ENCODE measurements at regions of chr17 and their contacts with region 1.

Region 1: DNA sequence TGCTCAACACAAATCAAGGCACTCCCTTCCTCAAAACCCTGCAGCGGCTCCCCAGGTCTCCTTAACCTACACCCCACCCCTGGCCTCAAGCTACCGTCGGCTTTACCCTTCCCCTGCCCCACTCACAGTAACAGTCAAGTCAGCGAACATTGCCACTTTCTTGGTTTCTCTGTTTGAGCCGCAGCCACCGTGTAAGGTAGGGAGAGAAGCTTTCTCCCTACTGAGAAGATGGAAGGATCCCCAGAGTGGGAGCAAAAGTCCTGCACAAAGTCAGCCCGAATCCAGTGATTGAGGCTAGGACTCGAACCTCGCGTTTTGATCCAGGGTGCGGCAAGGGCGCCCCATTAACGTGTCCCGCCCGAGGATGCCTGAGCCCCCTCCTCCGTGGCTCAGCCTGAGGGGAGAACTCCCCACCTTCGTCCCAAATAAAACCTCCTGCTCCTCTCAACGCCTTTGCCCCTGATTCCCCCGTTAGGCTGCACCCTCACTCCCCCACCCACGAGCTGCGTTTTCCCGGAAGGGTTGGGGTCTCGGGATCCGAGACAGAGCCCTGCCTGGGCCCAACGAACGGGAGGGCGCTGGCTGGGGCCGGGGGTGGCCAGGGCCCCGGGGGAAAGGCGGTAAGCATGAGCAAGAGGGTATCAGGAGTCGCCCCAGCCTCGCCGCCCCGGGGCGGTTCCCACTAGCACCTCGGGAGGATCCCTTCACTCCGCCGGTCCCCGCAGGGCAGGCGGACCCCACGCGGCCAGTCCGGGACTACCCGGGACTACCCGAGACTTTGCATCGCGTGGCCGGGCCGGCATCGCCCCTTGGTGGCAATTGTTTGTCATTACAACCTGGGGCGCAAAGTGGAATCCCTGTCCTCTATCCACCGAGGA is 9.9 kb upstream of the NAGS start:
- DNase-seq: peak in 1 of 2 donors; percentile 68
- H3K4me3 ChIP-seq: no peak overlapping the region
- H3K27ac ChIP-seq: no peak overlapping the region
- H3K4me1 ChIP-seq: peaks cover 0 to 9% (median 6%) of the 10 kb centered on the region in 4 donors
- H3K27me3 ChIP-seq: peaks cover 0 to 19% of the 10 kb centered on the region in 2 donors
- CTCF ChIP-seq: peak; percentile 61 to 65

Region 2: GRCh38 chr17:43946069-43946696 is 48.3 kb before region 1 on chr17:
- intact Hi-C with region 1: loop called (anchors 2 kb)
- DNase-seq: no peak
- H3K4me3 ChIP-seq: no peak overlapping the region
- H3K27ac ChIP-seq: no peak overlapping the region
- H3K4me1 ChIP-seq: no peaks in the 10 kb centered on the region
- H3K27me3 ChIP-seq: peaks cover 0 to 38% of the 10 kb centered on the region in 2 donors
- CTCF ChIP-seq: no peak

Region 3: GRCh38 chr17:44065668-44066203 is 71.2 kb after region 1 on chr17:
- intact Hi-C with region 1: no loop called
- DNase-seq: no peak
- H3K4me3 ChIP-seq: peak overlapping the region; percentile 63 to 72
- H3K27ac ChIP-seq: peak overlapping the region; percentile 88 to 93
- H3K4me1 ChIP-seq: peaks cover 0 to 37% (median 15%) of the 10 kb centered on the region in 4 donors
- H3K27me3 ChIP-seq: no peaks in the 10 kb centered on the region
- CTCF ChIP-seq: no peak

Region 4: DNA sequence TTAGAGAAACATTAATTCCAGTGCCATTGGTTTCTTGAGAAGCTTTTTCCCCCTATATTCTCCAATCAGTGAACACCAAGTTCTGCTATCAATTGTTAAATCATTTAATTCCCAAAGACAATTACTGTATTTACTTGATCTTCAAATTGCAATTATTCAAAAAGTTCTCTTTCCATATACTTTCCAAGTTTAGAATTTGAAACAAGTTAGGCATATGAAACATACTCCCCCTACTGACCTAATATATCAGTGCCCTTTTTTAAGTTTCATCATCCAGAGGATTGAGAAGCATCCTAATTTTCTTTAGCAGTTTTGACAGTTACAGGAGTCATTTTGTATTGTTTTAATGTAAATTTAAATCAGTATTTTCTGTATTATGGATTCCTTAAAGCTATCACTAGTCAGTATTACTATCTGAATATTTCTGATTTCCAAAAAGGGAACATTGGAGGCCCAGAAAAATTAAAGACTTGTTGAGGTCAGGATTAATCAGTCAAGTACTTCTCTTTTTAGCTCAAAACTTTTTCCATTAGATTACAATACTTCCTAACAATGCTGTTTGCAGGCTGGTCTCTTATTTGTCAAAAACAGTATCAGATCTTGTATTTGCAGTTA is 678.1 kb after region 1 on chr17:
- intact Hi-C with region 1: no loop called
- DNase-seq: no peak
- H3K4me3 ChIP-seq: no peak overlapping the region
- H3K27ac ChIP-seq: no peak overlapping the region
- H3K4me1 ChIP-seq: no peaks in the 10 kb centered on the region
- H3K27me3 ChIP-seq: no peaks in the 10 kb centered on the region
- CTCF ChIP-seq: peak in 1 of 2 experiments; percentile 13